HEK293 (cell line): ENCODE measurements at regions of chr5 and their contacts with region 1.

Region 1: DNA sequence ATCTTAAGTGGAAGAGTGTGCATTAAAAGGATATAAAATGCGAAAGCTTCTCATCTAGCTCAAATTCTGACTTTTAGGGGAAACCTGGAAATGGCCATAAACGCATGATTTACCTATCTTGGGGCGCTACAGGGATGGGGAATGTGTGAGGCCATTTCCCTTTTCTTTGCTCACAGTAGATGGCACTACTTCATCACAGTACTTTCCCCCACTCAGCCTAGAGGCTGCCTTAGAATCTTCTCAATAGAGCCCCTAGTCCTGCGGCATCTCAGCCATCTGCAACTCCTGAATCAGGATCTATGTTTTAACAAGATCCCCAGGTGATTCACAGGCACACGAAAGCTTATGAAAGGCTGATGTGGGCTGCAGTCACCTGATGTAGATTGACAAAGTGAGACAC is 110.8 kb downstream of the LHFPL2 start:
- H3K4me3 ChIP-seq: no peak overlapping the region
- H3K27ac ChIP-seq: no peak overlapping the region
- H3K4me1 ChIP-seq: no peaks in the 10 kb centered on the region
- CTCF ChIP-seq: peak; percentile 81

Region 2: GRCh38 chr5:78320401-78320800 is 217.4 kb before region 1 on chr5:
- CTCF ChIA-PET with region 1: interaction called, 13 read pairs
- POLR2A ChIA-PET with region 1: no interaction called
- H3K4me3 ChIP-seq: no peak overlapping the region
- H3K27ac ChIP-seq: no peak overlapping the region
- H3K4me1 ChIP-seq: no peaks in the 10 kb centered on the region
- CTCF ChIP-seq: peak; percentile 21; the same call in 1 of the 2 replicates

Region 3: GRCh38 chr5:78467752-78468357 is 70.0 kb before region 1 on chr5:
- CTCF ChIA-PET with region 1: interaction called, 18 read pairs
- POLR2A ChIA-PET with region 1: no interaction called
- H3K4me3 ChIP-seq: no peak overlapping the region
- H3K27ac ChIP-seq: no peak overlapping the region
- H3K4me1 ChIP-seq: no peaks in the 10 kb centered on the region
- CTCF ChIP-seq: no peak

Region 4: GRCh38 chr5:78527054-78527859 is 10.6 kb before region 1 on chr5:
- CTCF ChIA-PET with region 1: interaction called, 13 read pairs
- POLR2A ChIA-PET with region 1: interaction called, 3 read pairs
- H3K4me3 ChIP-seq: no peak overlapping the region
- H3K27ac ChIP-seq: no peak overlapping the region
- H3K4me1 ChIP-seq: peaks cover 11% of the 10 kb centered on the region
- CTCF ChIP-seq: no peak